Sigmoid colon (tissue), 7 donors: ENCODE measurements at regions of chr6 and their contacts with region 1.

Region 1: GRCh38 chr6:160348142-160349019 is at the start of gene SLC22A3:
- DNase-seq: peak; percentile 77
- H3K4me3 ChIP-seq: peak within 1 kb of the TSS; percentile 57 to 87 (median 74)
- H3K27ac ChIP-seq: peak within 1 kb of the TSS; percentile 81 to 89 (median 84)
- H3K4me1 ChIP-seq: peaks cover 0 to 29% (median 16%) of the 10 kb centered on the region in 4 donors
- H3K27me3 ChIP-seq: no peaks in the 10 kb centered on the region
- CTCF ChIP-seq: peak in 3 of 4 experiments; percentile 15 to 43 (median 42)
- EP300 ChIP-seq: no peak
- POLR2A ChIP-seq: no peak
- total RNA-seq, gene SLC22A3: 13.6 to 26.3 (median 19.3) TPM

Region 2: DNA sequence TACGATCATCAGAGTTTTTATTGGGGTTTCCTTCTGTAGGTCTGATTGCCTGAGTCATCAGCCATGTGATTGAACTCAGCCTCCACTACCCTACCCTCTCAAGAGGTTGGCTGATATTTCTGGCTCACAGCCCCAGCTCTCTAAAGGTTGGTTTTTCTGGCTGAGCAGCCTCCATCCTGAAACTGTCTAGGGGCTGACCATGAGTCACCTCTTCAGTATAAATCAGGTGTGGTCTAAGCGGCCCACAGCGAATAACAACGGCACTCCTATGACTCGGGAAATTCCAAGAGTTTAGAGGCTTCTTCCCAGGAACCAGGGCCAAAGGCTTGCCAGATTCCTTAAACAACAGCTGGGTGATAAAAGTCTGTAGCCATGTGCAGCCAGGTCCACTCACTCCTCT is 770.8 kb before region 1 on chr6:
- intact Hi-C with region 1: no loop called
- DNase-seq: no peak
- H3K4me3 ChIP-seq: no peak overlapping the region
- H3K27ac ChIP-seq: no peak overlapping the region
- H3K4me1 ChIP-seq: no peaks in the 10 kb centered on the region
- H3K27me3 ChIP-seq: no peaks in the 10 kb centered on the region
- CTCF ChIP-seq: no peak
- EP300 ChIP-seq: no peak
- POLR2A ChIP-seq: no peak

Region 3: GRCh38 chr6:160088069-160088783 is 260.2 kb before region 1 on chr6:
- intact Hi-C with region 1: no loop called
- DNase-seq: peak; percentile 86
- H3K4me3 ChIP-seq: no peak overlapping the region
- H3K27ac ChIP-seq: peak overlapping the region; percentile 39 to 75 (median 62)
- H3K4me1 ChIP-seq: peaks cover 0 to 21% (median 12%) of the 10 kb centered on the region in 4 donors
- H3K27me3 ChIP-seq: no peaks in the 10 kb centered on the region
- CTCF ChIP-seq: peak; percentile 57 to 80 (median 70)
- EP300 ChIP-seq: no peak
- POLR2A ChIP-seq: no peak

Region 4: GRCh38 chr6:160386869-160387530 is 38.6 kb after region 1 on chr6:
- intact Hi-C with region 1: loop called (anchors 5 kb)
- DNase-seq: peak; percentile 82
- H3K4me3 ChIP-seq: no peak overlapping the region
- H3K27ac ChIP-seq: peak overlapping the region; percentile 2 to 54 (median 30)
- H3K4me1 ChIP-seq: peaks cover 0 to 32% (median 19%) of the 10 kb centered on the region in 4 donors
- H3K27me3 ChIP-seq: no peaks in the 10 kb centered on the region
- CTCF ChIP-seq: no peak
- EP300 ChIP-seq: no peak
- POLR2A ChIP-seq: no peak

Region 5: GRCh38 chr6:160455541-160456213 is 107.3 kb after region 1 on chr6:
- intact Hi-C with region 1: loop called (anchors 5 kb)
- DNase-seq: peak; percentile 87
- H3K4me3 ChIP-seq: peak overlapping the region in 3 of 4 donors; percentile 4 to 31 (median 27)
- H3K27ac ChIP-seq: peak overlapping the region; percentile 43 to 75 (median 68)
- H3K4me1 ChIP-seq: peaks cover 0 to 15% (median 11%) of the 10 kb centered on the region in 4 donors
- H3K27me3 ChIP-seq: no peaks in the 10 kb centered on the region
- CTCF ChIP-seq: peak; percentile 97 to 99 (median 99)
- EP300 ChIP-seq: no peak
- POLR2A ChIP-seq: no peak